MCF 10A (cell line): ENCODE measurements at regions of chr16 and their contacts with region 1.

Region 1: DNA sequence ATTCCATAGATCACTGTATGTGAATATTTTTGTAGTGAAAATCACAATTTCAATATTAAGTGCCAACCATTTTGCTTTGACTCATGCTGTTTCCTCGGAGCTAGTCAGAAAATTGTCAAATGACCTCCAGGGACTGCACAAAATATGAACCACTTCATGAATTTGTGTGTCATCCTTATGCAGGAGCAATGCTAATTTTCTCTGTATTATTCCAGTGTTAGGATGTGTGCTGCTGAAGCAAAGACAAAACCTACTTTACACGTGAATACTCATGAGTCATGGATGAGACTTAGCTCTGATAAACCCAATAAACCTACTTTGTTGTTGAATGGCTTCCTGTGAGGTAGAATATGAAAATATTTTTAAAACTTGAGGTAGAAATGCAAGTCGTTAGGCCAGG is 65.2 kb downstream of the SHCBP1 start:
- DNase-seq: no peak
- H3K4me3 Mint-ChIP-seq: no peak overlapping the region
- H3K27ac Mint-ChIP-seq: no peak overlapping the region
- H3K4me1 Mint-ChIP-seq: no peaks in the 10 kb centered on the region
- H3K27me3 Mint-ChIP-seq: no peaks in the 10 kb centered on the region
- CTCF ChIP-seq: no peak

Region 2: GRCh38 chr16:46573008-46573833 is 17.3 kb after region 1 on chr16:
- CTCF ChIA-PET with region 1: interaction called, 23 read pairs
- POLR2A ChIA-PET with region 1: interaction called, 3 read pairs
- intact Hi-C with region 1: no loop called
- DNase-seq: peak; percentile 56
- H3K4me3 Mint-ChIP-seq: peak overlapping the region; percentile 45
- H3K27ac Mint-ChIP-seq: peak overlapping the region; percentile 79
- H3K4me1 Mint-ChIP-seq: peaks cover 6% of the 10 kb centered on the region
- H3K27me3 Mint-ChIP-seq: no peaks in the 10 kb centered on the region
- CTCF ChIP-seq: no peak

Region 3: GRCh38 chr16:46583036-46583435 is 27.1 kb after region 1 on chr16:
- CTCF ChIA-PET with region 1: interaction called, 15 read pairs
- POLR2A ChIA-PET with region 1: no interaction called
- intact Hi-C with region 1: no loop called
- DNase-seq: no peak
- H3K4me3 Mint-ChIP-seq: no peak overlapping the region
- H3K27ac Mint-ChIP-seq: no peak overlapping the region
- H3K4me1 Mint-ChIP-seq: peaks cover 5% of the 10 kb centered on the region
- H3K27me3 Mint-ChIP-seq: no peaks in the 10 kb centered on the region
- CTCF ChIP-seq: no peak

Region 4: DNA sequence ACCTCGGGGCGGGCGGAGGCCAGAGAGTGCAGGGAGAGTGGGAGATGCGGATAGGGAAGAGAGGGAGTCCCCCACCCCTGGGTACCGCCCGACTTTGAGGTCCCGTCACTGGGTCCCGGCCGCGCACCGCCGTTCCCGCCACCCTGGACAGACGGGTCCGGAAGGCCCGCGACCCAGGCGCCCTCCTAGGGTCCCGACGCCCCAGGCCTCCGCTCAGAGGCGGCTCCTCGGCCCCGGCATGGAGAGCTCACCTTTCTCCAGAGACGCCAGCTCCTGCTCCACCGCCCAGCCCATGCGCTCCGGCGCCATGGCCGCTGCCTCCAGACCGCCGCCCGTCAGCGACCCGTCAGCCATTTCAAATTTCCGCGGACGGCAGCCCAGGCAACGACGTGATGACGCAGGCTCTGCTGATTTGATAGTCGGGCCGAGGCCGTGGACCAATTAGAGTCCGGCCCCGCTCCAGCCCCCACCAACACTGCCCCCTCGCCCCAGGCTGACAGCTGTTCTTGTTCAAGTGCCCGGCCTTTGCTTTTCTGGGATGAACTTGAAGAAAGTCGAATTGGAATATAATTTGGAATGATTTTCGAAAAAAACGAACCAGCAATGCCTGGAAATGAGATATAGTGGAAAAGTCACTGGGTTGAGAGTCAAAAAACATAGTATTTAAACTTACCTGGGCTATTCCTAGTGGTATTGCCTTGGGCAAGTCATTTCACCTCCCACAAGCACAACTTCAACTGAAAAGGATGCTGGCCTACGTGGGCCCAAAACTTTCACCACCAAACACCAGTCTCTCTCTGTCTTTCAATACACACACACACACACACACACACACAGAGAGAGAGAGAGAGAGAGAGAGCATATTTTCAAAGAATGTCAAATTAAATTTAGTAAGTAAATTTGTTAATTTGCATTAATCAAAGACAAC is 65.3 kb after region 1 on chr16 and contains the start of gene SHCBP1:
- CTCF ChIA-PET with region 1: interaction called, 10 read pairs
- POLR2A ChIA-PET with region 1: interaction called, 4 read pairs
- intact Hi-C with region 1: no loop called
- DNase-seq: peak; percentile 87
- H3K4me3 Mint-ChIP-seq: peak within 1 kb of the TSS; percentile 92
- H3K27ac Mint-ChIP-seq: peak within 1 kb of the TSS; percentile 67
- H3K4me1 Mint-ChIP-seq: peaks cover 17% of the 10 kb centered on the region
- H3K27me3 Mint-ChIP-seq: no peaks in the 10 kb centered on the region
- CTCF ChIP-seq: no peak
- total RNA-seq, gene SHCBP1: 17.2 and 21.4 TPM in 2 replicates

Region 5: DNA sequence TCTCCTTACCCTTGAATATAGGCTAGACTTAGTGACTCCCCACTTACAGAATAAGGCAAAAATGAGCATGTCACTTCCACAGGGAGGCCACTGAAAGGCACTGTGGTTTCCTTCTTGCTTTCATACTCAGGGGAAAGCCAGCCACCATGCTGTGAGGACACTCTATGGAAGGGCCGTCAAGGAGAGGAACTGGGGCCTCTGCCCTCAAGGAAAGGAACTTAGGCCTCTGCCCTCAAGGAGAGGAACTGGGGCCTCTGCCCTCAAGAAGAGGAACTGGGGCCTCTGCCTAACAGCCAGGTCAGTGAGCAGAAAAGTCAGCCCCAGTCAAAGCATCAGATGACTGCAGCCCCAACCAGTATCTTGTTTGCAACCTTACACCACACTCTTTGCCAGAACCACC is 103.0 kb after region 1 on chr16:
- CTCF ChIA-PET with region 1: no interaction called
- POLR2A ChIA-PET with region 1: no interaction called
- intact Hi-C with region 1: no loop called
- DNase-seq: no peak
- H3K4me3 Mint-ChIP-seq: no peak overlapping the region
- H3K27ac Mint-ChIP-seq: no peak overlapping the region
- H3K4me1 Mint-ChIP-seq: no peaks in the 10 kb centered on the region
- H3K27me3 Mint-ChIP-seq: no peaks in the 10 kb centered on the region
- CTCF ChIP-seq: no peak

Region 6: GRCh38 chr16:46715769-46716305 is 159.9 kb after region 1 on chr16:
- CTCF ChIA-PET with region 1: no interaction called
- POLR2A ChIA-PET with region 1: no interaction called
- intact Hi-C with region 1: no loop called
- DNase-seq: no peak
- H3K4me3 Mint-ChIP-seq: no peak overlapping the region
- H3K27ac Mint-ChIP-seq: no peak overlapping the region
- H3K4me1 Mint-ChIP-seq: no peaks in the 10 kb centered on the region
- H3K27me3 Mint-ChIP-seq: no peaks in the 10 kb centered on the region
- CTCF ChIP-seq: no peak